ENCODE measurements at regions of chr6 and their contacts with region 1.

Region 1: DNA sequence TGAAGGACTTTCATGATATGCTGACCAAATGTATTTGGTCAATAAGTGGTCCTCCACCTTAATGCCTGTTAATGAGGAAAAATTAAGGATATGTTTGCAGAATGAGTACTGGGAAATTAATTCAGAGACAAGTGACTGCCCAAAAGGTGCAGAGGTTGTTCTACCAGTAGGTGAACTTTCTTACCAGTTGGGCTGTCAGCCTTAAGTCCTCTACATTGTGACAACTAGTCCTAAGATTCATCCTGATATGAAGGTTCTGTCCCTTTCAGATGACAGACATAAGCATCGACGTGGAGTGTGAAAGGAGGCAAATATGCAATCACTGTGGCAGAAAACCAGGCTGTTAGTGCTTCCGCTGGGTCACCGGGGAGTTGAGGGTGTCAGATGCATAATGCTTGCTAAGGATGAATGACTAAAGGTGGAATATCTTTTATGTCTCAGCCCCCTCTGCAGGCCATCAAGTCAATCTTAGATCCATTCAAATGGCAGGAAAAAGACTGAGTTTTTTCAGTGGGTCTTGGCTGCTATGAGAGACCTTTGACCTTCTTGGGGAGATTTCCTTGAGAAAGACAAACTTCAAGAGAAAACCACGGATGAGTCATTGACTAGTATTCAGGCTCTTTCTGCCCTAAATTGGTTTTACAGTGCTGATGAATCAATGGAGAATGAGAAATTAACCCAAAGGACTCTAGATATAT is 226.0 kb downstream of the TPBG start:
- DNase-seq: peak; percentile 24
- H3K4me3 Mint-ChIP-seq: no peak overlapping the region
- H3K27ac Mint-ChIP-seq: no peak overlapping the region
- H3K4me1 Mint-ChIP-seq: peaks cover 24% of the 10 kb centered on the region
- H3K27me3 Mint-ChIP-seq: no peaks in the 10 kb centered on the region
- CTCF ChIP-seq: no peak

Region 2: GRCh38 chr6:82247634-82248232 is 341.9 kb before region 1 on chr6 and contains the start of gene IBTK:
- CTCF ChIA-PET with region 1: no interaction called
- intact Hi-C with region 1: loop called (anchors 2 kb)
- DNase-seq: peak; percentile 95
- H3K4me3 Mint-ChIP-seq: peak within 1 kb of the TSS; percentile 90
- H3K27ac Mint-ChIP-seq: peak within 1 kb of the TSS; percentile 99
- H3K4me1 Mint-ChIP-seq: peaks cover 19% of the 10 kb centered on the region
- H3K27me3 Mint-ChIP-seq: no peaks in the 10 kb centered on the region
- CTCF ChIP-seq: no peak
- total RNA-seq, gene IBTK: 48.3 and 54.9 TPM in 2 replicates

Region 3: DNA sequence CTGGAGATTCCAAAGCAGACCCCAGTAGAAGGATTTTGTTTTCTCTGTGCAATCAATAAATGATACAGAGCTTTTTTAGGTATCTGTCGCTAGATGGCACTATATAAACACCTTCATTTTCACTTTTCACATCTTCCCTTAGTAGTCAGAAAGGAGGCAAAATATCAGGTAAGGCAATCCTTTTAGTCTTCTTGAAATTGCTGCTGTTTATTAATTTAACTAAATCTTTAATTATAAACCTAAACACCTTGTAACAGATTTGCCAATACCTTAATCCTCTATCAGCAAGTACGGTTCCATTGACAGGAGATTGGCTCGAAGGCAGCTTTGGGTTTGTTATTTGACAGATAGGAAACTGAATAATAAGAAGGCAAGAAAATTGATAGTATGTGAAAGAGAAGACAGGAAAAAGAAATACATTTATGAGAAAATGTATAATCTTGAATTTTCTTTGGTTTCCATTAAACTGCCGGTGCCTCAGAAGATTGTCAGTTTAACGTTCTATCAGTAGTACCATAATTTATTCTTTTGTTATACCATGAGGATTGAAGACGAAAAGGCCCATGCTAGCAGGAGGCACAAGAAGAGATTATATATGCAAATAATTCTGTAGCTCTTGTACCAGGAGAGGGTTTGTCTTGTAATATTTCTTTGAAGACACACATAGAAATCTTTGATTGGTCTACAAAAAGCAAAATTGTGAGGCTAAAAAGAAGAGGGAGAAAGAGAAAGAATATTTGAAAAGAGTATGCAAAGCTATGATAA is 318.6 kb before region 1 on chr6:
- CTCF ChIA-PET with region 1: interaction called, 3 read pairs
- intact Hi-C with region 1: loop called (anchors 1 kb)
- DNase-seq: no peak
- H3K4me3 Mint-ChIP-seq: no peak overlapping the region
- H3K27ac Mint-ChIP-seq: no peak overlapping the region
- H3K4me1 Mint-ChIP-seq: no peaks in the 10 kb centered on the region
- H3K27me3 Mint-ChIP-seq: no peaks in the 10 kb centered on the region
- CTCF ChIP-seq: no peak

Region 4: GRCh38 chr6:82331031-82331773 is 258.5 kb before region 1 on chr6:
- CTCF ChIA-PET with region 1: no interaction called
- intact Hi-C with region 1: loop called (anchors 2 kb)
- DNase-seq: no peak
- H3K4me3 Mint-ChIP-seq: no peak overlapping the region
- H3K27ac Mint-ChIP-seq: no peak overlapping the region
- H3K4me1 Mint-ChIP-seq: peaks cover 23% of the 10 kb centered on the region
- H3K27me3 Mint-ChIP-seq: no peaks in the 10 kb centered on the region
- CTCF ChIP-seq: no peak